ENCODE measurements at regions of chr6 and their contacts with region 1.

Region 1: DNA sequence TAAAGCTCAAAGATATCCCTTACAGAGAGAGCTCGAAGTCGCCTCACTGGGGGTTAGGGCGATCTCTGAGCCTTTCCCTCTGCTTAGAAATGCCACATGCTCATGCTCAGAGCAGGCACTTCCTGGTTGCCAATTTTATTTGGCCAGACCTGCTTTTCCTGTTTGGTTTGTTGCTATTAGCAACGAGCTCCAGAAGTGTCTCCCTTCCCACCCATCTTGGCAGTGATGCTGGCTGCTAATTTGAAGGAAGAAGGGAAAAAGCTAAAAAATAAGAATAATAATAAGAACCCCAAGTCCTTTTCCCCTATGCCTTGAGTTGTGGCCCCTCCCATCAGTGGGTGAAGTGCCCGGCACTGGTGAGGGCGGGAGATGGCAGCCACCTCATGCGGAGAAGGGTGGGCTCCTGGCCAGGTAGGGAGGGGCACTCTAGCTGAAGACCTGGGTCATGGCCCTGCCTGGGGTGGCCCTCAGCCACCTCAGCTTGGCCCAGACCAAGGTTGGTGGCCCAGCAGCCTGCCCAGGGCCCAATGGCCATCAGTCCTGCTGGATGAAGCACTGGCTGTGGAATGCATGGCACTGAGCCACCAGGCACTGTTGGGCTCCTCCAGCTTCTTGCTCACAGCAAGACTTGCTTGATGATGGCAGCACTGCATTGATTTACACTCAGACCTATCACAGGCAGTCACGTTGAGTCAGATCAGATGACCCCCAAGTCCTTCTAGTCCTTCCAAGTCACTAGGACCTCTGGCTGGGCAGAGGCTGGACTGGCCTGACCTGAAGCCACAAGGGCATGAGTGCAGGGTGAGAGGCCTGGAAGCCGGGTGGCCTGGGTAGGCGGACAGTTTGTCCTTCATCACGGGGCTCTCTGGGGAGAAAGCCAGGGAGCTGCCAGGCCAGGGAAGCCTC is 79.0 kb downstream of the SYNJ2 start:
- DNase-seq: peak; percentile 59 to 77 (median 70)
- H3K4me3 ChIP-seq: no peak overlapping the region
- H3K27ac ChIP-seq: peak overlapping the region in 1 of 2 donors; percentile 70
- H3K4me1 ChIP-seq: peaks cover 11% of the 10 kb centered on the region
- H3K27me3 ChIP-seq: no peaks in the 10 kb centered on the region
- CTCF ChIP-seq: no peak
- EP300 ChIP-seq: no peak
- POLR2A ChIP-seq: no peak

Region 2: DNA sequence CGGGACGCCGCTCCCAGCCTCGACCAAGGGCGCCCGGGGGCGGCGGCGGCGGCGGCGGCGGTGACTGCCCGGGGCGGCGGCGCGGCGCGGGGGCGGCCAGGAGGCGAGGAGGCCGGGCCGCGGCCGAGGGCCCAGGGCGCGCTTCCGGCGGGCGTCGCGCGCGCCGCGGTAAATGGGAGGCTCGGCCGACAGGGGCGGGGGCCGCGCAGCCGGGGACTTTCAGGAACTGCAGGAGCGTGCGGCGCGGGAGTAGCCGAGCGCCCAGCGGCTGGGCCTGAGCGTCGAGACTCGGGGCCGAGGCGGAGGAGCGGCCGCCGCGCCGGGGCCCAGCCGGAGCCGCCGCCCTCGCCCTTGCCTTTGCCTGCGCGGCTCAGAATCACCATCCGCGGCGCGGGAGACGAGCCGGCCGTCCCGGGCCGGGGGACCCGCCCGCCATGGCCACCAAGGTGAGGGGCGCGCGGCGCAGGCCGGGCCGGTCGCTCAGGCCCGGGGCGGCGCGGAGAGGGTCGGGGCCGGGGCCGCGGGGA is 237.6 kb before region 1 on chr6 and contains the start of gene SNX9:
- intact Hi-C with region 1: no loop called
- DNase-seq: peak; percentile 70 to 86 (median 80)
- H3K4me3 ChIP-seq: peak within 1 kb of the TSS; percentile 76
- H3K27ac ChIP-seq: peak within 1 kb of the TSS; percentile 99 to 100
- H3K4me1 ChIP-seq: peaks cover 4% of the 10 kb centered on the region
- H3K27me3 ChIP-seq: no peaks in the 10 kb centered on the region
- CTCF ChIP-seq: no peak
- EP300 ChIP-seq: no peak
- POLR2A ChIP-seq: peak; percentile 71
- total RNA-seq, gene SNX9: 32.9 to 47.8 (median 38.7) TPM

Region 3: GRCh38 chr6:157981395-157982296 is 79.1 kb before region 1 on chr6 and contains the start of gene SYNJ2:
- intact Hi-C with region 1: loop called in 1 of 4 experiments (anchors 10 kb)
- DNase-seq: peak; percentile 76 to 87 (median 77)
- H3K4me3 ChIP-seq: peak within 1 kb of the TSS; percentile 62
- H3K27ac ChIP-seq: peak within 1 kb of the TSS; percentile 27 to 35
- H3K4me1 ChIP-seq: no peaks in the 10 kb centered on the region
- H3K27me3 ChIP-seq: no peaks in the 10 kb centered on the region
- CTCF ChIP-seq: peak; percentile 23 to 68 (median 55)
- EP300 ChIP-seq: no peak
- POLR2A ChIP-seq: peak; percentile 30
- total RNA-seq, gene SYNJ2: 4.5 to 18.7 (median 10.0) TPM

Region 4: DNA sequence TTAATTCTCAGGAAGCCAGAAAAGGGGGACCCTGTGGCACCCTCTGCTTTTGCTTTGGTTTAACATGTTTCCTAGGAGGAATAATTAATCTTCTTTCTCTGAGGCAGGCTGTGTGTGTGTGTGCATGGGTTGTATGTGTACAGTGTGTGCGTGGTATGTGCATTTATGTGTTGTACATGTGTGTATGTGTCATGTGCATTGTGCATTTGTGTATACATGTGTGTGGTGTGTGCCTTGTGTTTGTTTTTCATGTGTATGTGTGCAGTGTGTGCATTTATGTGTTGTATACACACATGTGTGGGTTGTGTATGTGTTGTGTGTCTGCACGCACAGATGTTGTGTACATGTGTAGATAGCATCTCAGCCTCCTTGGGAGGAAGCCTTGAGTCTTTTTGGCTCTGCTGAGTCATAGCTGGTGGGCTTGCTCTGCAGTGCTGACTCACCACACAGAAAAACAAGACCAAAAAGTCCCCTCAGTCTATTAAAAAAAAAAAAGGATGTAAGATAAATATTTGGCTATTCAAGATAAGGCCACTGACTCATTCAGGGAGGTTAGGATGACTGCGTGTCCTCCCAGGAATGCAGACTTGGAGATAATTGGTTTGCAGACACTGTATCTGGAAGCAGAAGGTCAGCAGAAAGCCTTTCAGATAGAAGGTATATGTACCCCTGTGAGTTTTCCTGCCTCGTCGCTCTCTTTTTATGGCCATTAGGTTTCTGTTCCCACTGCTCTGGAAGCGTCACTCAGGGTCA is 20.5 kb before region 1 on chr6:
- intact Hi-C with region 1: no loop called
- DNase-seq: peak in 4 of 5 donors; percentile 49 to 67 (median 54)
- H3K4me3 ChIP-seq: no peak overlapping the region
- H3K27ac ChIP-seq: peak overlapping the region; percentile 27 to 31
- H3K4me1 ChIP-seq: peaks cover 22% of the 10 kb centered on the region
- H3K27me3 ChIP-seq: no peaks in the 10 kb centered on the region
- CTCF ChIP-seq: no peak
- EP300 ChIP-seq: no peak
- POLR2A ChIP-seq: no peak